H1 (cell line): ENCODE measurements at regions of chr1 and their contacts with region 1.

Region 1: DNA sequence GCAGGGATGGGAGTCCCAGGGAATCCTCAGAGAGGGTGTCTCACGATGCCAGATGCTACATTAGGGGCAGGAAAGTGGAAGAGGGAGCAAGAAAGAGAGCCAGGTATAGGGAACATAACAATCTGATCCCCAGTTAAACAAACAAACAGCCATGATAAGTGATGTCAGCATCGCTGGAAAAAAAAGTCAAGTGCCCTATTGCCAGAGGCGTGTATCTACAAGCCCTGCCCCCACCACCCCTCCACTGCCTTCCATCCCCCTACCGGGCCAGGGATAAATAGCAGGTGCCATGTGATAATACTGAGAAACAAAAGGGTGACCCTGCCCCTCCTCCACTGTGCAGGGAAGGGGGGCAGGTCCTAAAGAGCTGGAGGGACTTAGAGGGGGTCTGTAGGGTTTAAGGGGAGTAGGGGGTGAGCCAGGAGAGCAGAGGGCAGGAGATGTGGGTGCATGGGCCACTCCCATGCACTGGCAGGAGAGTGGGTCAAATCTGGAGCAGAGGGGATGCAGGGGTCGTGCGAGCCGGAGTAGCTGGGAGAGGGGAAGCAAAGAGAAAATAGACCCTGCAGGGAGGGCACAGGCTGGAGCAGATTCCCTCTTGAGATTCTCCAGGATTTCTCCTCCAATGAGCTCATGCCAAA is 3.4 kb downstream of the SLC26A9 start:
- DNase-seq: peak; percentile 44 to 81
- H3K4me3 ChIP-seq: no peak overlapping the region
- H3K27ac ChIP-seq: no peak overlapping the region
- H3K4me1 ChIP-seq: peaks cover 7 to 16% (median 14%) of the 10 kb centered on the region in 4 experiments
- H3K27me3 ChIP-seq: no peaks in the 10 kb centered on the region; a peak in 1 of 7 replicates
- CTCF ChIP-seq: peak; percentile 41 to 58 (median 50)
- EP300 ChIP-seq: no peak
- POLR2A ChIP-seq: no peak
- RAD21 ChIP-seq: peak in 1 of 2 experiments; percentile 23; a peak in 1 of 4 replicates

Region 2: DNA sequence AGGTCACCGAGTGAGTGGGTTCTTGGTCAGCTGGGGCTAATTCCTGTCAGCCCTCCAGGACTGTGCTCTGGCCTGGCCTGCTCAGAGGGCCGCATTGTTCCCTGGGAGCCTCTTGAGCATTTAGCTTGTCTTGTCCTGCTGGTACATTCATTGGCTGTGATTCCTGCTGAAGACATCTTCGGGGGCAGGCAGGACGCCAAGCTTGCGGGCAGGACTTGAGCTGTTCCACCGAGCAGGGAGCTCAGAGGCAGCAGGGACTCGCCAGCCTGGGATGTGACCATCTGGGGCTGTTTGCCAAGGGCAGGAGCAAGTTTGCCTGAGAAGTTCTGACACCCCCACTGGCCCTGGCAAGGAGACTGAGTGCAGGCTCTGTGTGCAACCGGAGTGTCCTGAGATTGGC is 10.5 kb after region 1 on chr1:
- CTCF ChIA-PET with region 1: interaction called, 35 read pairs
- POLR2A ChIA-PET with region 1: interaction called, 4 read pairs
- DNase-seq: no peak
- H3K4me3 ChIP-seq: no peak overlapping the region
- H3K27ac ChIP-seq: no peak overlapping the region
- H3K4me1 ChIP-seq: peaks cover 0 to 6% (median 6%) of the 10 kb centered on the region in 4 experiments; a peak in 5 of 7 replicates
- H3K27me3 ChIP-seq: peaks cover 0 to 2% (median 0%) of the 10 kb centered on the region in 4 experiments; a peak in 2 of 7 replicates
- CTCF ChIP-seq: no peak
- EP300 ChIP-seq: no peak
- POLR2A ChIP-seq: no peak
- RAD21 ChIP-seq: no peak

Region 3: DNA sequence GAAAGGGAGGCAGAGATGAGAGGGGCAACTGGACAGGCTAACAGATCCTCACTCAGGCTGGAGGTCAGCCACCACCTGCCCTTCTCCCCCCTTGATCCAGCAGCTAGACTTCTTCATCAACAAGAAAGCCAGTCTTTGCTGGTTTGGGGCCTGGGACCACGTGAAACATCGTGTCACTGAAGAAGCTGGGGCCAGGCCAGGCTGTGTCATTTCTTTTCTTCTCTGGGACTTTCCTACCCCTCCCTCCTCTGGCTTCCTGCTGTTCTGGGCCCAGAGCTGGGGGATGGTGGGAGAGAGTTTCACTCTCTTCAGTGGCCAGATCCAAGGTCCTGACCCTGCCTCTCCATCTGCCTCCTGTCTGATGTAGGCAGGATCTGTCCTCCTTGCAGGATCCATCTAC is 21.6 kb after region 1 on chr1:
- CTCF ChIA-PET with region 1: interaction called, 11 read pairs
- POLR2A ChIA-PET with region 1: no interaction called
- DNase-seq: no peak
- H3K4me3 ChIP-seq: no peak overlapping the region
- H3K27ac ChIP-seq: no peak overlapping the region
- H3K4me1 ChIP-seq: peaks cover 0 to 9% (median 4%) of the 10 kb centered on the region in 4 experiments; a peak in 4 of 7 replicates
- H3K27me3 ChIP-seq: no peaks in the 10 kb centered on the region
- CTCF ChIP-seq: no peak
- EP300 ChIP-seq: no peak
- POLR2A ChIP-seq: no peak
- RAD21 ChIP-seq: no peak